ENCODE measurements at regions of chr4 and their contacts with region 1.

Region 1: DNA sequence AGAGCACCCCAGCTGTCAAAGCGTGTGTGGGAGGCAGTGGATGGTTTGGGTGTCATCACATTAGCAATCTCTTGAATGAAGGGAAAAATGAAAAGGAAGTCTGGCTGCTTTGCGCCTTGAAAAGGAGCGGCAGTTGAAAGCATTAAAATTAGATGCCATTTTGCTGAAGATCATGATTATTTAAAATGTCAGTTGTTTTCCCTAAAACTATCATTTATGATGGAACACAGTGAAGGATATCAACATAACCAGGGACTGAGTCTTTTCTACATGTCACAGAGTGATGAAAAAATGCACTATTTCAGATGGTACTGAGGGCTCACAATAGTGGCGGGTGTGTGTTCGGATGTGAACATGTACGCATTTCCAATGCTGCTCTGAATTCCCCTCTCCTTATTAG is 450.2 kb upstream of the CPEB2 start:
- DNase-seq: no peak
- ATAC-seq: no peak
- H3K4me3 ChIP-seq: no peak overlapping the region
- H3K27ac ChIP-seq: no peak overlapping the region
- H3K4me1 ChIP-seq: no peaks in the 10 kb centered on the region
- H3K27me3 ChIP-seq: no peaks in the 10 kb centered on the region

Region 2: DNA sequence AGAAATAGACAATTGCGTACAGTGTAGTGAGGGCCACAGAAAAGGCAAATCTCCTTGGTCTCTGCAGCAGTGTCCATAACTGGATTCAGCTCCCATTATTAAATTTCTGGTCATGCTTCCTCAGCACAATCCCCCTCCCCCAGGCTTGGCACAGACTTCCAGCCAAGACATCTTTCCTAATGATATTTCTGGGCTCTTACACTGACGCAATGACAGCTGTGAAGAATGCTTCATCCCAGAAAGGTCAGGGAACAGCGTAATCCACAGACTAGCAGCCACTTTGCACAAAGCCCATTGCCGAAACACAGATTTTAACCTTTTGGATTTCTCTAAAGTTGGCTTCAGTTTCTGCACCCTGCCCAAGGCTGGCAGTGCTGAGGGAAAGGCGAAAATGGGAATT is 147.4 kb before region 1 on chr4:
- intact Hi-C with region 1: no loop called
- DNase-seq: no peak
- ATAC-seq: no peak
- H3K4me3 ChIP-seq: no peak overlapping the region
- H3K27ac ChIP-seq: no peak overlapping the region
- H3K4me1 ChIP-seq: no peaks in the 10 kb centered on the region
- H3K27me3 ChIP-seq: no peaks in the 10 kb centered on the region

Region 3: DNA sequence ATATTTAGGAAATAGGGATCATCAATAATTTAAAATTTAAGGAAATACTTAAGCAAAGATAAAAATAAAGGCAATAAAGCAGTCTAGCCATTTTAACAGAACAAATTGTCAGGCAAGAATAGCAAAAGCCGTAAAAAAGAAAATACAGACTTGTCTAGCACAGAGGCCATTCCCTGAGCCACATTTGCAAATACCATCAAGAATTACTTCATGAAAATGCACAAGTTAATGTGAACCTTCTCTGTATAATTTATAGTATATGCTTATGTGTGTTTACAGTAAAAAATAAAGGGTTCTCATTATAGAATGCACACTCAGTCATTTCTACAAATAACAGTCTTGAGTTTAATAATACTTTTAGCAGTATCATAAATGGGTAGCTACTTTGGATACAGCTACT is 55.7 kb before region 1 on chr4:
- intact Hi-C with region 1: loop called in 1 of 2 experiments (anchors 2 kb)
- DNase-seq: no peak
- ATAC-seq: no peak
- H3K4me3 ChIP-seq: no peak overlapping the region
- H3K27ac ChIP-seq: no peak overlapping the region
- H3K4me1 ChIP-seq: no peaks in the 10 kb centered on the region
- H3K27me3 ChIP-seq: no peaks in the 10 kb centered on the region